HepG2 (cell line): ENCODE measurements at regions of chr1 and their contacts with region 1.

Region 1: DNA sequence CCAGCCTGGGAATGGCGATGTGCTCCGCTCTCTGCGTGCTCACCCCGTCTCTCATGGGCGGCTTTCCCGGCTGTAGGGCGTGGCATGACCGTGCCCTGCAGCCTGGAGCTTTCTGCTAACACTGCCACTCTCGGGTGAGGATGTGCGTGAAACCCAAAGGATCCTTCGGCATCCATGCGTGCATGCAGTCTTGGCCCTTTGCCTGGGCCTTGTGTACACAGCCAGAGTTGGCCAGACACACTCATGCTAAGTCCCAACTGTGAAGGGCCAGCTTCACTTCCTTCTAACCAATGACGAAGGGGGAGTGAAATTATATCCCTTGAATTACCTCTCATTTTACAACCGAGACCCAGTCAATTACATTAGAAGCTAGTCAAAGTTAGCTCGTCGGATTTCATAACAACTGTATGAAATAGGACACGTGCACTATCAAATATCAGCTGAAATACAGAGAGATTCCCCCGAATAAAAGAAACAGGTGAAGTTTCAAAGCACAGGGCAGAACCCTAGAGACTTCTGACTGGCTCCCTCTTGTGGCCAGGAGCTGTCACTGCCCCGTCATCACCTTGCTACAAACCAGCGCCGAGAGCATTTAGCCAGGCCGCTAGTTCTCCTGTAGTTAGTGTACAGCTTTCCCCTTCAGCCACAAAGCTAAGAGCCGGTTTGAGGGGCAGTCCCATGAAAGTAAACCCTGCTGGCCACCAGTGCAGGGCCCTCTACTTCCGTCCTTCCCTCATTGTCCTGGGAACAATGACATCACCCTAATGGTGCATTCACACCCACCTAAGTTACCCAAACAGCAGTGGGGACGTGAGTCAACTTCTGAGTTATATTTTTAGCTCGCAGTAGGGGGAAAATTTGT is 63.4 kb upstream of the COA6 start:
- DNase-seq: peak; percentile 50
- ATAC-seq: peak; percentile 68
- H3K4me3 ChIP-seq: peak overlapping the region; percentile 22 to 51 (median 28); a peak in 3 of 6 replicates
- H3K27ac ChIP-seq: no peak overlapping the region
- H3K4me1 ChIP-seq: peaks cover 47% of the 10 kb centered on the region
- H3K27me3 ChIP-seq: no peaks in the 10 kb centered on the region
- CTCF ChIP-seq: peak; percentile 86
- EP300 ChIP-seq: no peak
- POLR2A ChIP-seq: no peak
- RAD21 ChIP-seq: peak; percentile 73

Region 2: GRCh38 chr1:234114648-234115307 is 195.1 kb before region 1 on chr1:
- CTCF ChIA-PET with region 1: no interaction called
- POLR2A ChIA-PET with region 1: no interaction called
- in situ Hi-C with region 1: no loop called
- intact Hi-C with region 1: loop called (anchors 2 kb)
- DNase-seq: peak; percentile 22
- ATAC-seq: no peak
- H3K4me3 ChIP-seq: no peak overlapping the region
- H3K27ac ChIP-seq: no peak overlapping the region
- H3K4me1 ChIP-seq: peaks cover 14% of the 10 kb centered on the region
- H3K27me3 ChIP-seq: peaks cover 0 to 4% of the 10 kb centered on the region in 2 experiments; a peak in 3 of 5 replicates
- CTCF ChIP-seq: peak; percentile 71
- EP300 ChIP-seq: no peak
- POLR2A ChIP-seq: no peak
- RAD21 ChIP-seq: no peak

Region 3: DNA sequence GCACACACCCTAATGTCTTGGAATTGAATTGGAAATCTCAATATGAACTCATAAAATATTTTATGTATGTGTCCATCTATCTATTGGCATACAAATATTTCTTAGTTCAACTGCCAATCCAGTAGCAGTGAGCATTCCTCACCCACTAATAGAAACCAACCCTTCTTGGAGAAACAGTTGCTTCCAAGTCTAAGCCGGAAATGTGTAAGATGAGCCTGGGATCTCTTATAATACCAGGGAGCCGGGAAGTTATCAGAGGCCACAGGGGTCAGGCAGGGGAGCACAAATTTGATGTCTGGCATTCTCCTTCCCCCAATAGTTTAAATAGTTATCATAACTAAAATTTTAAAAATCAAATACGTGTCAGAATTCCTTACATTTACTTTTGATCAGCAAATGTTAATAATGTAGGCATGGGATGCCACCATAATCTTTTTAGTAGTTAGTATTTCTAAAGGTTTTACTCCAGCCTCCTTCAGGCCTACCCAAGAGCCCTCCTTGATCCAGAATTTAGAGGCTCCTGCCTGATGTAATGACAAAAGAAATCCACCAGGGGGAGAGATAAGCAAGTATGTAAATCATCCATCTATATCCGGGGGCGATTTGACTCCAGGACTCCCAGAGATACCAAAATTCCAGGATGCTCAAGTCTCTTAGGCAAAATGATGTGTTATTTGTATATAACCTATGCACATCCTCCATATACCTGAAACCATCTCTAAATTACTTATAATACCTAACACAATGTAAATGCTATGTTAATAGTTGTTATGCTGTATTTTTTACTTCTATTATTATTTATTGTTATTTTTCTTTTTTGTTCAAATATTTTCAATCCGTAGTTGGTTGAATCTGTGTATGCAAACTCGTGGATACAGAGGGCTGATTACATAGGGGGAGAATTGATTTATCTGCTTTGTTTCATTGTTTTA is 155.2 kb before region 1 on chr1:
- CTCF ChIA-PET with region 1: interaction called, 12 read pairs
- POLR2A ChIA-PET with region 1: no interaction called
- in situ Hi-C with region 1: loop called (anchors 25 kb)
- intact Hi-C with region 1: loop called (anchors 1 kb)
- DNase-seq: peak; percentile 68
- ATAC-seq: peak; percentile 81
- H3K4me3 ChIP-seq: no peak overlapping the region
- H3K27ac ChIP-seq: no peak overlapping the region
- H3K4me1 ChIP-seq: no peaks in the 10 kb centered on the region
- H3K27me3 ChIP-seq: no peaks in the 10 kb centered on the region
- CTCF ChIP-seq: peak; percentile 67
- EP300 ChIP-seq: no peak
- POLR2A ChIP-seq: no peak
- RAD21 ChIP-seq: peak; percentile 41; the same call in 1 of the 2 replicates

Region 4: DNA sequence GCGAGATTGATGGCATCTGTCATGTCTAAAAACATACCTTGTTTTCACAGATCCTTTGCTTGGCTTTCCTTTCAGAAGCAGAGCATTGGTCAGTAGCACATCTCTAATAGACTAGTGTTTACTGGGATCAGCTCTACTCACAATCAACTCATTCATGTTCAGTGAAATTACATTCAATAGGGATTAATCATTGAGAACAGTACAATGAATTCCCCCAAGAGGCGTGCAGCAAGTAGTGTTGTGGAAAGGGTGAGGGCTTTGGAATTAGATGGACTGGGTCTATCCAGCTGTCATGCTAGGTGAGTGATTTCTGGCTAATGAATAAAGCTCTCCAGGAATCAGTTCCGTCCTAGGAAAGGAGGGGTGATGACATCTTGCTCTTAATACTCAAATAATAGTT is 91.8 kb before region 1 on chr1:
- CTCF ChIA-PET with region 1: interaction called, 5 read pairs
- POLR2A ChIA-PET with region 1: no interaction called
- in situ Hi-C with region 1: no loop called
- intact Hi-C with region 1: loop called (anchors 1 kb)
- DNase-seq: no peak
- ATAC-seq: no peak
- H3K4me3 ChIP-seq: no peak overlapping the region
- H3K27ac ChIP-seq: no peak overlapping the region
- H3K4me1 ChIP-seq: peaks cover 14% of the 10 kb centered on the region; the same call in 1 of the 2 replicates
- H3K27me3 ChIP-seq: peaks cover 1 to 50% of the 10 kb centered on the region in 2 experiments; a peak in 3 of 5 replicates
- CTCF ChIP-seq: no peak
- EP300 ChIP-seq: no peak
- POLR2A ChIP-seq: no peak
- RAD21 ChIP-seq: no peak

Region 5: DNA sequence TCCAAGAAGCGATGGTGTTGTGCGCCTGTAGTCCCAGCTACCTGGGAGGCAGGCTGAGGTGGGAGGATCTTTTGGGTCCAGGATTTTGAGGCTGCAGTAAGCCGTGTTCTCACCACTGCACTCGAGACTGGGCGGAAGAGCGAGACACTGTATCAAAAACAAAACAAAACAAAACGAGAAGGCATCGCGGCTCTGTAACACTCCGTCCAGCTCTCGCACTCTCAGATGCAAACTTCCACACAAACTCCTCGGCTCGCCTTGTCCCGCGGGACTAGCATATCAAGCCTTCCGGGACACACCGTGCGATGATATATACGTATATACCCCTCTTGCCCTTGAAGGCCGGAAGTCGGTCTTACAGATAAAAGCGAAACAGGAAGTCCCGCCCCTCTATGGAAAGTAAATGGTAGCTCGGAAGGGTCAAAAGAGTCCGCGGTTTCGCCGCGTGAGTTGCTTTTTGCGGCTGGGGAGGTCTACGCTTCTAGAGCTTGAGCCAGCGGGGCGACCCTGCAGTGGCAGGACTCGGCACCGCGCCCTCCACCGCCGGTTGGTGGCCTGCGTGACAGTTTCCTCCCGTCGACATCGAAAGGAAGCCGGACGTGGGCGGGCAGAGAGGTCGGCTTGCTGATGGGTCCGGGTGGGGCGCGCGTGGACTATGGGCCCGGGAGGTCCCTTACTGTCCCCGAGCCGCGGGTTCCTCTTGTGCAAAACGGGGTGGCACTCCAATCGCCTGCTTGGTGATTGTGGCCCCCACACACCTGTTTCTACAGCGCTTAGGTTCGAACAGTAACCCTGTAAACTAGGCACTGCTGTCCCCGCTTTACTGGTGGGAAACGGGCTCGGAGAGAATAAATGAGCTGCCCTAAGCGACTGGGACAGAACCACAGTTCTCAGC is 63.5 kb after region 1 on chr1 and contains the start of gene COA6:
- CTCF ChIA-PET with region 1: no interaction called
- POLR2A ChIA-PET with region 1: interaction called, 6 read pairs
- in situ Hi-C with region 1: no loop called
- intact Hi-C with region 1: loop called (anchors 5 kb)
- DNase-seq: peak; percentile 98
- ATAC-seq: peak; percentile 94
- H3K4me3 ChIP-seq: peak within 1 kb of the TSS; percentile 76 to 89 (median 80)
- H3K27ac ChIP-seq: peak within 1 kb of the TSS; percentile 94
- H3K4me1 ChIP-seq: peaks cover 51% of the 10 kb centered on the region
- H3K27me3 ChIP-seq: no peaks in the 10 kb centered on the region; a peak in 1 of 5 replicates
- CTCF ChIP-seq: peak; percentile 37; the same call in 1 of the 2 replicates
- EP300 ChIP-seq: peak; percentile 32 to 59; a peak in 2 of 4 replicates
- POLR2A ChIP-seq: peak; percentile 88
- RAD21 ChIP-seq: peak; percentile 31; the same call in 1 of the 2 replicates
- total RNA-seq, gene COA6: 104 and 158 TPM in 2 replicates